BJ (cell line): ENCODE measurements at regions of chr2 and their contacts with region 1.

Region 1: DNA sequence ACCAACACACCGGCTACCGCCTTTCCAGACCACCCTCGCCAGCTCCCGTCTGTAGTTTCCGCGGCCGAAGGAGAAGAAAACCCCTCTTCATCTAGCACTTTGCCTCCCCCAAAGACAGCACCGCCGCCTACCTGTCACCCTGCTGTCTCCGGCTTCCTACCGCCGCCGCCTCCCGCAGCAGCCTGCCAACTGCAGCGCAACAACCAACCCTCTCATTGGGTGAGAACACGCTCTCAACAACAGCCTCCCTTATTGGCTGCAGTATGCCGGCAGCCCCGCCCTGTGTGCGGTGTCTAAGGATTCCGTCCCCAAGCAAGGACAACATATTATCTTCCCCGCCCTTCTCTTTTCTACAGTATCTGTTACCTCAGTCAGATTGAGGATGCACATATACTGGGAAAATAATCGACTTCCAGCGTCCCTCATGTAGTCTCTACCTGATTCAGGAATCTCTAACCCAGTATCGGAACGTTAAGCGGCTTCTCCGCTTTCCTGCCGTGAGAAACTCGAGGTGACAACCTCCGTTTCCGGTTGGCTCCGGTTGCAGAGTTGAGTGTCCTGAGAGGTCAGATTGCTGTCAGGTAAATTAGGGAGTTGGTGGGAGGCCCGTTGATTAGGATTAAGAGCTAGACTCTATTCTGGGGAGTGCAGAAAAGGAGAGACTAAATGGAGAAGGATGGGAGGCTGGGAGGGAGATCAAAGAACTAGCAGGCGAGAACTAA is at the starts of genes HYCC2 and NDUFB3:
- DNase-seq: peak; percentile 58
- H3K4me3 ChIP-seq: peak within 1 kb of the TSS; percentile 99
- H3K27me3 ChIP-seq: no peaks in the 10 kb centered on the region
- CTCF ChIP-seq: peak; percentile 46
- polyA plus RNA-seq, gene HYCC2: 3.0 and 6.9 TPM in 2 replicates
- polyA plus RNA-seq, gene NDUFB3: 25.2 and 80.0 TPM in 2 replicates

Region 2: DNA sequence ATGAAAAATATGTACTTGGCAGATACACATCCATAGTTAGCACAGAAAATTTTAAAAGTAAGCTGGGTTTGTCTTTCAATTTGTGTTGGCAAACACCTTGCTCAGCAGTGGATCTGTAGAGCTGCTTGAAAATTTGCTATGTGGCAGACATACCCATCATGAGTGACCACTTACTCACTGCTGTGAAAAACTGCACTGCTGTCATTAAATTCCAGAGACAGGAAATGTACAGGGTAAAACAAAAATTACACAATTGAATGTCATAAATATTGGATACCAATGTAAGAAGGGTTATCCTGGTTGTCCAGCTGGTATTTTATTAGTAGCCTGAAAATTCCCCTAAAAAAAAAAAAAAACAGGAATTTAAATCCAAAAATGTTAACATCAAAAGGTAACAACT is 158.0 kb before region 1 on chr2:
- CTCF ChIA-PET with region 1: interaction called, 10 read pairs
- POLR2A ChIA-PET with region 1: no interaction called
- DNase-seq: peak; percentile 45
- H3K4me3 ChIP-seq: no peak overlapping the region
- H3K27me3 ChIP-seq: no peaks in the 10 kb centered on the region
- CTCF ChIP-seq: no peak

Region 3: GRCh38 chr2:201057087-201057521 is 14.5 kb before region 1 on chr2:
- CTCF ChIA-PET with region 1: interaction called, 12 read pairs
- POLR2A ChIA-PET with region 1: interaction called, 4 read pairs
- DNase-seq: no peak
- H3K4me3 ChIP-seq: no peak overlapping the region
- H3K27me3 ChIP-seq: no peaks in the 10 kb centered on the region
- CTCF ChIP-seq: no peak

Region 4: GRCh38 chr2:201158111-201158929 is 86.7 kb after region 1 on chr2:
- CTCF ChIA-PET with region 1: interaction called, 20 read pairs
- POLR2A ChIA-PET with region 1: no interaction called
- DNase-seq: peak; percentile 31
- H3K4me3 ChIP-seq: no peak overlapping the region
- H3K27me3 ChIP-seq: no peaks in the 10 kb centered on the region
- CTCF ChIP-seq: peak; percentile 71

Region 5: DNA sequence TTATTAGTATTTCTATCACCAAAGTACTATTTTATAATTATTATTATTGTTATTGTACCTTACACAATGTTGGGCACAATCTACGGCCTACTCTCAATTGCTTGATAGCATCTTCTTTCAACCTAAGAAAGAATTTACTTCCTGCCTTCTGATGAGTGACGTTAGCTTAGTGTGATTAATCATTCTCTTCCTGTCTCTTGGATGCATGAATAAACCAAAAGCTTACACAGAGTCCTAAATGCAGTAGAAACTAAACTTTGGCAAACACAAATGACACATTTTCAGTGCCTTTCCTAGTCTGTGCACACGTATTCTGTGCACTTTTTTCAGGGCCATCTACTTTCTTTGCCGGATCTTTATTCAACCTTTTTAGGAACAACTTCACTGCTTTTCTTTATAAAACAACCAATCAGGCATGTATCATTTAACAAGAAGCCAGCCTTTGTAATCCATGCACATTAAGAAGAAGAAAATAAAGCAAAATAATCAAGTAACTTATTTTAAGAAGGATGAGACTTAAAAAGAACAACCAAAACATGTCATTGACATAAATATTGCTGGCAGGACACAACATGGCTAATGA is 360.5 kb after region 1 on chr2:
- CTCF ChIA-PET with region 1: no interaction called
- POLR2A ChIA-PET with region 1: no interaction called
- DNase-seq: no peak
- H3K4me3 ChIP-seq: no peak overlapping the region
- H3K27me3 ChIP-seq: no peaks in the 10 kb centered on the region
- CTCF ChIP-seq: no peak